ENCODE measurements at regions of chr20 and their contacts with region 1.

Region 1: DNA sequence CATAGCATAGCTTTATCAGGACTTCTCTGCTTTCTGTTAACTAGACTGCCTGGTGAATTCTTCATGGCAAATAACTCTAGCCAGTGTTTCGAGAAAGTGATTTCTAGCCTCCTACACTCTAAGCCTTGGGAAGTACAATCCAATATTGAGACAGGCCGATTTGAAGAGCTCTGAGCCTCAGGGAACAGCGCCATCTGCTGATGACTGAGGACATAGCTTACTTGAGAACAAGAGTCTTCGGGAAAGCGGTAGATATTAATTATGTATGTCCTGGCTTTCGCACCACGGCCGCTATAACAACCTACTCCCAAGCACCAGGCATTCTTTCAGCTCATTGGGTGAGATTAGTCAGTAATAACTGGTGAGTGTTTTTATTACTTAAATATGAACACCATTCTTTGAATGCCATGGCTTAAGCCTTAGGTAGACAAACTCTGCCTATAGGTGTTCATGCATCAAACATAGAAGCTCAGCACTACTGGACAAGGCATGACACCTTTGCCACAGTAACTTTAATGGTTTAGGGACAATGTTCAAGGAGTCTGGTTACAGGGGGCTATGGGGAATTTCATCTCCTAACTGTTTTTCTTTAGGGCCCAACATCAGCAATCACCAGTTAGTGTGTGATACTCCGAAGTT is 518.6 kb downstream of the BMP2 start:
- DNase-seq: peak; percentile 88
- H3K4me3 Mint-ChIP-seq: no peak overlapping the region
- H3K27ac Mint-ChIP-seq: no peak overlapping the region
- H3K4me1 Mint-ChIP-seq: no peaks in the 10 kb centered on the region
- H3K27me3 Mint-ChIP-seq: no peaks in the 10 kb centered on the region
- CTCF ChIP-seq: peak; percentile 76

Region 2: GRCh38 chr20:6178537-6178936 is 1107.5 kb before region 1 on chr20:
- CTCF ChIA-PET with region 1: interaction called, 13 read pairs
- POLR2A ChIA-PET with region 1: no interaction called
- intact Hi-C with region 1: no loop called
- DNase-seq: peak; percentile 50
- H3K4me3 Mint-ChIP-seq: no peak overlapping the region
- H3K27ac Mint-ChIP-seq: no peak overlapping the region
- H3K4me1 Mint-ChIP-seq: no peaks in the 10 kb centered on the region
- H3K27me3 Mint-ChIP-seq: no peaks in the 10 kb centered on the region
- CTCF ChIP-seq: peak; percentile 45

Region 3: DNA sequence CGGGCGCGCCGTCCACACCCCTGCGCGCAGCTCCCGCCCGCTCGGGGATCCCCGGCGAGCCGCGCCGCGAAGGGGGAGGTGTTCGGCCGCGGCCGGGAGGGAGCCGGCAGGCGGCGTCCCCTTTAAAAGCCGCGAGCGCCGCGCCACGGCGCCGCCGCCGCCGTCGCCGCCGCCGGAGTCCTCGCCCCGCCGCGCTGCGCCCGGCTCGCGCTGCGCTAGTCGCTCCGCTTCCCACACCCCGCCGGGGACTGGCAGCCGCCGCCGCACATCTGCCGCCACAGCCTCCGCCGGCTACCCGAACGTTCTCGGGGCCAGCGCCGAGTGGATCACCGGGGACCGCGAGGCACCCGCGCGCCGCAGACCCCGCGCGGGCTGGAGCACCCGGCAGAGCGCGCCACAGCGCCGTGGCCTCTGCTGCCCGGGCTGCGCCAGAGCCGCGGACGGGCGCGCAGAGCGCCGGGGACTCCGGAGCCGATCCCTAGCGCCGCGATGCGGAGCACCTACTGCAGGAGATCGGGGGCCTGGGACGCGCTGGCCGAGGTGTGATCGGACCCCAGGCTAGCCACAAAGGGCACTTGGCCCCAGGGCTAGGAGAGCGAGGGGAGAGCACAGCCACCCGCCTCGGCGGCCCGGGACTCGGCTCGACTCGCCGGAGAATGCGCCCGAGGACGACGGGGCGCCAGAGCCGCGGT is 518.4 kb before region 1 on chr20 and contains the start of gene BMP2:
- CTCF ChIA-PET with region 1: interaction called, 22 read pairs
- POLR2A ChIA-PET with region 1: no interaction called
- intact Hi-C with region 1: loop called (anchors 5 kb)
- DNase-seq: peak; percentile 41
- H3K4me3 Mint-ChIP-seq: peak within 1 kb of the TSS; percentile 86
- H3K27ac Mint-ChIP-seq: no peak within 1 kb of the TSS
- H3K4me1 Mint-ChIP-seq: peaks cover 20% of the 10 kb centered on the region
- H3K27me3 Mint-ChIP-seq: no peaks in the 10 kb centered on the region
- CTCF ChIP-seq: no peak
- total RNA-seq, gene BMP2: 6.7 and 7.7 TPM in 2 replicates

Region 4: GRCh38 chr20:6837730-6838129 is 448.3 kb before region 1 on chr20:
- CTCF ChIA-PET with region 1: interaction called, 11 read pairs
- POLR2A ChIA-PET with region 1: no interaction called
- intact Hi-C with region 1: no loop called
- DNase-seq: no peak
- H3K4me3 Mint-ChIP-seq: no peak overlapping the region
- H3K27ac Mint-ChIP-seq: no peak overlapping the region
- H3K4me1 Mint-ChIP-seq: peaks cover 6% of the 10 kb centered on the region
- H3K27me3 Mint-ChIP-seq: peaks cover 20% of the 10 kb centered on the region
- CTCF ChIP-seq: no peak

Region 5: GRCh38 chr20:7161690-7162089 is 124.3 kb before region 1 on chr20:
- CTCF ChIA-PET with region 1: interaction called, 4 read pairs
- POLR2A ChIA-PET with region 1: no interaction called
- intact Hi-C with region 1: loop called (anchors 5 kb)
- DNase-seq: peak; percentile 45
- H3K4me3 Mint-ChIP-seq: no peak overlapping the region
- H3K27ac Mint-ChIP-seq: no peak overlapping the region
- H3K4me1 Mint-ChIP-seq: peaks cover 9% of the 10 kb centered on the region
- H3K27me3 Mint-ChIP-seq: no peaks in the 10 kb centered on the region
- CTCF ChIP-seq: peak; percentile 37

Region 6: DNA sequence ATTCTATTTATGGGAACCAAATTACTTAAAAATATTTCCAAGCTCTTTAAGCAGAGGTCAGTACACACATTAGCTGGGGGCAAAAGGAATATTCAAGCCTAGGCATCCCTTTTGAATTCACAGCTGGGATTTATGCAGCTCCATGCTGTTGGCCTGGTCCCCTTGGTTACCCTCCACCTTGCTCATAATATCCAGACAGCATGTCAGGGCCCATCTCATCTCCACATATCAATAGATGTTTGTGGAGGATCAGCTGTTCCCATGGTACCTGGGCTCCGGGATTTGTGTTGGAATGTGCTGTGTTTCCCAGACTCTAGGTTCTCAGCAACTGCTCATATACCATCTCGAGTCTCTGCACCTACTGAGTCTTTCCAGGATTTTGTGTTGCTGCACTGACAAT is 16.2 kb after region 1 on chr20:
- CTCF ChIA-PET with region 1: interaction called, 29 read pairs
- POLR2A ChIA-PET with region 1: interaction called, 4 read pairs
- intact Hi-C with region 1: no loop called
- DNase-seq: no peak
- H3K4me3 Mint-ChIP-seq: no peak overlapping the region
- H3K27ac Mint-ChIP-seq: peak overlapping the region; percentile 92
- H3K4me1 Mint-ChIP-seq: peaks cover 16% of the 10 kb centered on the region
- H3K27me3 Mint-ChIP-seq: no peaks in the 10 kb centered on the region
- CTCF ChIP-seq: no peak

Region 7: GRCh38 chr20:7343237-7343636 is 57.2 kb after region 1 on chr20:
- CTCF ChIA-PET with region 1: no interaction called
- POLR2A ChIA-PET with region 1: no interaction called
- intact Hi-C with region 1: no loop called
- DNase-seq: no peak
- H3K4me3 Mint-ChIP-seq: no peak overlapping the region
- H3K27ac Mint-ChIP-seq: no peak overlapping the region
- H3K4me1 Mint-ChIP-seq: peaks cover 6% of the 10 kb centered on the region
- H3K27me3 Mint-ChIP-seq: no peaks in the 10 kb centered on the region
- CTCF ChIP-seq: no peak

Region 8: GRCh38 chr20:7375905-7376304 is 89.9 kb after region 1 on chr20:
- CTCF ChIA-PET with region 1: interaction called, 26 read pairs
- POLR2A ChIA-PET with region 1: interaction called, 3 read pairs
- intact Hi-C with region 1: loop called (anchors 1 kb)
- DNase-seq: peak; percentile 53
- H3K4me3 Mint-ChIP-seq: no peak overlapping the region
- H3K27ac Mint-ChIP-seq: no peak overlapping the region
- H3K4me1 Mint-ChIP-seq: no peaks in the 10 kb centered on the region
- H3K27me3 Mint-ChIP-seq: no peaks in the 10 kb centered on the region
- CTCF ChIP-seq: peak; percentile 35